ENCODE measurements at regions of chr19 and their contacts with region 1.

Region 1: GRCh38 chr19:13060964-13061927 is 41.4 kb downstream of the LYL1 start:
- DNase-seq: peak; percentile 92 to 97
- ATAC-seq: peak; percentile 90
- H3K4me3 ChIP-seq: no peak overlapping the region
- H3K27ac ChIP-seq: peak overlapping the region; percentile 33 to 74
- H3K4me1 ChIP-seq: peaks cover 2 to 6% of the 10 kb centered on the region in 2 donors
- H3K27me3 ChIP-seq: no peaks in the 10 kb centered on the region

Region 2: GRCh38 chr19:13022859-13023636 is 38.2 kb before region 1 on chr19:
- intact Hi-C with region 1: loop called (anchors 1 to 5 kb)
- DNase-seq: peak; percentile 90 to 91
- ATAC-seq: peak; percentile 86
- H3K4me3 ChIP-seq: peak overlapping the region; percentile 8 to 25
- H3K27ac ChIP-seq: peak overlapping the region; percentile 62 to 79
- H3K4me1 ChIP-seq: peaks cover 6% of the 10 kb centered on the region in 2 donors
- H3K27me3 ChIP-seq: no peaks in the 10 kb centered on the region

Region 3: DNA sequence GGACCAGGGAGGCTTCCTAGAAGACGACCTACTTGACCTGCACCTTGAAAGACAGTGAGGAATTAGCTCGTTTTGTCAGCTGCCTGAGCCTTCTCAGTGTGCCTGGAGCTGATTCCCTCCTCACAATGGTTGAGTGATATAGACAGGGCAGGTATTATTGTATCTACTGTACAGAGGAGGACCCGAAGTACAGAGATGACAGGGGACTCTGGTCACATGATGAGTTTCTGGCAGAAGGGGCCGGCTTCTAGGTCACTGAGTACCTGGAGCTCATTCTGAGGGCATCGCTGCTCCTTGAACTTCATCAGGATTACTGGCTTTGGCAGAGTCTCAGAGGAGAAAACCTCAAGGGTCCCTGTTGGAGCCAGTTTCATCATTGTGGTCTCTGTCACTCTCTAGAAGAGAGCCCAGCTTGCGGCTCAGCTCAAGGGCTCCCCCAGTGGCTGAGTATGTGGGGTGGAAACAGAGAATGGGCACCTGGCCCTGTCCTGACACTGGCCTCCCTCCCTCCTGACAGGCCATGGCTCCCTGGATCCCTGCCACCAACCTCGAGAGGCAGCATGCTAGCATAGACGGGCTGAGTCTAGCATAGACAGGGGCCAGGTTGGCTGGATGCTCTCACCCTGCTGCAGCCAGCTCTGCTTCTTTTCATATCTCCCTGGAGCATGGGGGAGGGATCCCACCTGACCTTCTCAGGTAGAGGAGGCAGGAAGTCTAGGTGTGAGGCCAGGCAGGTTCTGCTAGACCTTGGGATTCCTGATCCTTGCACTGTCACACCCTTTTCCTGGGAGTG is 27.2 kb before region 1 on chr19:
- intact Hi-C with region 1: loop called in 1 of 2 experiments (anchors 5 kb)
- DNase-seq: peak; percentile 83 to 89
- ATAC-seq: peak; percentile 65
- H3K4me3 ChIP-seq: no peak overlapping the region
- H3K27ac ChIP-seq: peak overlapping the region; percentile 44 to 98
- H3K4me1 ChIP-seq: peaks cover 11 to 13% of the 10 kb centered on the region in 2 donors
- H3K27me3 ChIP-seq: no peaks in the 10 kb centered on the region

Region 4: DNA sequence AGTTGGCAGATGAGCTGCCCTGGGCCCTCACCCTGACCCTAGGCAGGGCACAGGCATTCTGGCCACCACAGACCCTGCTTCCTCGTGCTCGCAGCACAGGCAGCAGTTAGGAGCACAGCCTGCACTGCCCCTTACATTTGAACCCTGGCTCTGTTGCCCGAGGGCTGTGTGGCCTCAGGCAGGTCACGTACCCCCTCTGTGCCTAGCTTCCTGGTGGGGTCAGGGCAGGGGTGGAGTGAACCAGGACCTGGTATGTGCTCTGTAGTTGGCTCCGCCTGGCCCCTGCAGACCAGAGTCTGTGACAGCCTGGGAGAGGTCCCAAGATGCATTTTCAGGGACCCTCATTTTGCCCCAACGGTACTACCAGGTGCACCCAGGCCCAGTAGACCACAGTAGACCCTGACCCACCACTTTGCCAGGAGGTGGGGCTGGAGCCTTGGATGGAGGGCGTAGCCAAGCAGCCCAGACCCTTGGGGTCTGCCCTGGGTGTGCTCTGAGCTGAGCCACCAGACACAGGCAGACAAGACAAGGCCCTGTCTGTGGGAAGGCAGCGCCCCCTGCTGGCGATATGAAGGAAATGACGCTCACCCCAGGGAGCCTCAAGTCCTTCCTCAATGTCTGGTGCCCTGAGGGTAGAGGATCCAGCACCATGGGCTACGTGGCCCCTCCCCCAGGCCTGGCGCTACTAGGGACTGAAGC is 32.3 kb after region 1 on chr19:
- intact Hi-C with region 1: loop called in 1 of 2 experiments (anchors 2 kb)
- DNase-seq: peak; percentile 90 to 93
- ATAC-seq: peak; percentile 73
- H3K4me3 ChIP-seq: no peak overlapping the region
- H3K27ac ChIP-seq: peak overlapping the region; percentile 49 to 59
- H3K4me1 ChIP-seq: peaks cover 0 to 3% of the 10 kb centered on the region in 2 donors
- H3K27me3 ChIP-seq: no peaks in the 10 kb centered on the region

Region 5: DNA sequence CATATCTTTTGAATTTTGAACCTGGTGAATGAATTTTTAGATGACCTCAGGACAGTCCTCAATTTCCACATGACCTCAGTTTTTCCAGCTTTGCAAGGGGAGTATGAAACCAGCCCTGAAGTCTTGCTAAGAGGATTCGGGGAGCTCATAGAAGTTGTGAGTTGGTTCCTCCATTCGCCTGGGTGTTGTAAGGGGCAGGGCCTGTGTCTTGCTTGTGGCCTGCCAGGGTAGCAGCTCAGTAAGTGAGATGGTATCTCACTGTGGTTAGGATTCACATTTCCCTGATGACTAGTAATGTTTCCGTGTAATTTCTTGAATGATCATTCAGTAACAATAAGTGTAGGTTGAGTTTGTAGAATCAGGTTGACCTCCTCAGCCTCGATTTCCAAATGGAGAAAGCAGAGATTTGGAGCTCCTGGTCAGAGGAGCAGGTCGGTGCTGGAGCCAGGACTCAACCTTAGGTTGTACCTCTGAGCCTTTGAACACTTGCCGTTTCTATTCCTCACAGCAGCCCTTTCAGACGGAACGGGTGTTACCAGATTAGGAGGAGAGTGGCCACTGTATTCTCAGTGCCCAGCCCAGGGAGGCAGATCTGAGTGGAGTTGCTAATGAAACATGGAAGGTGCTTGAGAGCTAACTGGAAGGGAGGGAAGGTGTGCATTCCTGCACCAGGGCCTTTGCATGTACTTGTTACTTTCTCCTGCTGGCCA is 71.4 kb after region 1 on chr19:
- intact Hi-C with region 1: no loop called
- DNase-seq: no peak
- ATAC-seq: no peak
- H3K4me3 ChIP-seq: no peak overlapping the region
- H3K27ac ChIP-seq: no peak overlapping the region
- H3K4me1 ChIP-seq: no peaks in the 10 kb centered on the region
- H3K27me3 ChIP-seq: no peaks in the 10 kb centered on the region